Caco-2 (cell line): ENCODE measurements at regions of chr20 and their contacts with region 1.

Region 1: DNA sequence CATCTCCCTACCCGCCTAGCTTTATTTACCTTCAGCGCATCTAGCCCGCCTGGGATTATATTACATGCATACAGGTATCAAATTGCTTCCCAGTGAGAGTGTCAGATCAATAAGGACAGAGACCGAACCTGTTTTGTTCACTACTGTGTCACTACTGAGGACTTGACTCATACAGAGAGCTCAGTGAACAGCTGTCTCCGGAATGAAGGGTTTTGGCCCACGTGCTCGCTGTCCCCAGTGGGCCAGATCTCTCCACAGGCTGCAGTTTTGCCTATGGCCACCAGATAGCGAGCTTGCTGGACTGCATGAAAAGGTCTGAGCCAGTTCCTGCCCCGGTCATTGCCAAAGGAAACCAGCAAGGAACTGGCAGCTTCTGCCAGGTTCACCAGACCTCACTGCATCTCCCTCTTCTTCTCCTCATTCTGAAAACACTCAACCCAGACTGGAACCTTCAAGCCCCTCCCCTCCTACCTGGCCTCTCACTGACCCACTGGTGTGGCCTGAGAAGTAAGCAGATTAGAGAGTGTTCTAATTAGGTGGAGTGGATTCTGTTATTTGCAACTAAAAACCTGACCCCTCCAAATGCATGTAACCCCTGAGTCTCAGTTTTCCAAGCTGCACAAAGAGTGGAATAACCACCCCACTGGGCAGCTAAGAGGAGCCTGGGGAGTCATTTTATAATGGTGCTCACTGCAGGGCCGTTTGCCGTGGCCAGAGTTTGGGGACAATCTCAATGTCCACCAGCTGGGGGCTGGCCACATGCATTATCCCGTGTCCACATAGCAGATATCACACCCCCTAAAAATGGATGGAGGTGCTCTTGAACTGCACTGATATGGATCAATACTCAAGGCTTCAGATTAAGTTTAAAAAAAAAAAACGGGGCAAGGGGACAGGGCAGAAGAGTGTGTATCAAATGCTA is 150.7 kb downstream of the ZMYND8 start:
- DNase-seq: peak; percentile 80 to 87
- H3K4me3 ChIP-seq: no peak overlapping the region
- H3K4me3 Mint-ChIP-seq: no peak overlapping the region
- H3K27ac Mint-ChIP-seq: peak overlapping the region; percentile 63
- H3K4me1 ChIP-seq: peaks cover 20% of the 10 kb centered on the region
- H3K4me1 Mint-ChIP-seq: peaks cover 39% of the 10 kb centered on the region
- H3K27me3 ChIP-seq: no peaks in the 10 kb centered on the region
- H3K27me3 Mint-ChIP-seq: no peaks in the 10 kb centered on the region
- CTCF ChIP-seq: peak; percentile 81

Region 2: GRCh38 chr20:47220161-47220582 is 14.3 kb after region 1 on chr20:
- CTCF ChIA-PET with region 1: interaction called, 5 read pairs
- POLR2A ChIA-PET with region 1: no interaction called
- intact Hi-C with region 1: loop called (anchors 2 kb)
- DNase-seq: peak; percentile 72 to 81
- H3K4me3 ChIP-seq: no peak overlapping the region
- H3K4me3 Mint-ChIP-seq: no peak overlapping the region
- H3K27ac Mint-ChIP-seq: no peak overlapping the region
- H3K4me1 ChIP-seq: no peaks in the 10 kb centered on the region
- H3K4me1 Mint-ChIP-seq: peaks cover 9% of the 10 kb centered on the region
- H3K27me3 ChIP-seq: no peaks in the 10 kb centered on the region
- H3K27me3 Mint-ChIP-seq: no peaks in the 10 kb centered on the region
- CTCF ChIP-seq: peak; percentile 85 to 93